Dendritic cell treated with granulocyte-macrophage colony-stimulating factor and Interleukin-4, amounts not matched to agents 40 ng/mL and 50 ng/mL, for 4 days (primary cell): ENCODE measurements at regions of chr2 and their contacts with region 1.

Region 1: GRCh38 chr2:213151437-213152064 is at the start of gene IKZF2:
- H3K4me3 Mint-ChIP-seq: peak within 1 kb of the TSS; percentile 86
- H3K27ac Mint-ChIP-seq: peak within 1 kb of the TSS; percentile 75
- H3K4me1 Mint-ChIP-seq: peaks cover 37% of the 10 kb centered on the region
- H3K27me3 Mint-ChIP-seq: peaks cover 23% of the 10 kb centered on the region

Region 2: GRCh38 chr2:212686285-212686895 is 465.2 kb before region 1 on chr2:
- intact Hi-C with region 1: loop called (anchors 2 kb)
- H3K4me3 Mint-ChIP-seq: no peak overlapping the region
- H3K27ac Mint-ChIP-seq: no peak overlapping the region
- H3K4me1 Mint-ChIP-seq: peaks cover 11% of the 10 kb centered on the region
- H3K27me3 Mint-ChIP-seq: no peaks in the 10 kb centered on the region

Region 3: DNA sequence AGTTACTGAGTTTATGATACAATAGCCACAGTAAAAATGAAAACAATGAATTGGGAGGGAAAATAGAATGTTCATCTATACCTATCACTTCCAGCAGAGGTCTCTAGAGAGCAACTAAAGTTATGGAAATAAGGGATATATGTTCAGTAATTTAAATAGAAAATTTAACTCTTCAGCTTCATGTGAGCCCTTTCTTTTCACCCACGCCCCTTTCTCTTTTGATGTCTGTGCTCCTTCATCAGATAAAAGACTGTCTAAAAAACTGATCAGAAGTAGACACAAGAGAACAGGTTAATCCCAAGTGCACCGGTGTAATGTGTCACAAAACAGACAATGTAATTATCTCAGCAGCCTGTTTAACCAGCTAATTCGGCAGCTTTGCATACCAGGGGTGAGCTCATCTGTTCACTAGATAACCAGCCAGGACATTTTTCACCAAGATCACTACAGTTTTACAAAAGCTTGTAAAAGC is 374.5 kb before region 1 on chr2:
- intact Hi-C with region 1: loop called (anchors 1 kb)
- H3K4me3 Mint-ChIP-seq: no peak overlapping the region
- H3K27ac Mint-ChIP-seq: no peak overlapping the region
- H3K4me1 Mint-ChIP-seq: no peaks in the 10 kb centered on the region
- H3K27me3 Mint-ChIP-seq: no peaks in the 10 kb centered on the region

Region 4: GRCh38 chr2:212863185-212863588 is 288.4 kb before region 1 on chr2:
- intact Hi-C with region 1: loop called (anchors 5 kb)
- H3K4me3 Mint-ChIP-seq: no peak overlapping the region
- H3K27ac Mint-ChIP-seq: no peak overlapping the region
- H3K4me1 Mint-ChIP-seq: no peaks in the 10 kb centered on the region
- H3K27me3 Mint-ChIP-seq: no peaks in the 10 kb centered on the region